Posterior cingulate gyrus (tissue), 11 donors: ENCODE measurements at regions of chr3 and their contacts with region 1.

Region 1: DNA sequence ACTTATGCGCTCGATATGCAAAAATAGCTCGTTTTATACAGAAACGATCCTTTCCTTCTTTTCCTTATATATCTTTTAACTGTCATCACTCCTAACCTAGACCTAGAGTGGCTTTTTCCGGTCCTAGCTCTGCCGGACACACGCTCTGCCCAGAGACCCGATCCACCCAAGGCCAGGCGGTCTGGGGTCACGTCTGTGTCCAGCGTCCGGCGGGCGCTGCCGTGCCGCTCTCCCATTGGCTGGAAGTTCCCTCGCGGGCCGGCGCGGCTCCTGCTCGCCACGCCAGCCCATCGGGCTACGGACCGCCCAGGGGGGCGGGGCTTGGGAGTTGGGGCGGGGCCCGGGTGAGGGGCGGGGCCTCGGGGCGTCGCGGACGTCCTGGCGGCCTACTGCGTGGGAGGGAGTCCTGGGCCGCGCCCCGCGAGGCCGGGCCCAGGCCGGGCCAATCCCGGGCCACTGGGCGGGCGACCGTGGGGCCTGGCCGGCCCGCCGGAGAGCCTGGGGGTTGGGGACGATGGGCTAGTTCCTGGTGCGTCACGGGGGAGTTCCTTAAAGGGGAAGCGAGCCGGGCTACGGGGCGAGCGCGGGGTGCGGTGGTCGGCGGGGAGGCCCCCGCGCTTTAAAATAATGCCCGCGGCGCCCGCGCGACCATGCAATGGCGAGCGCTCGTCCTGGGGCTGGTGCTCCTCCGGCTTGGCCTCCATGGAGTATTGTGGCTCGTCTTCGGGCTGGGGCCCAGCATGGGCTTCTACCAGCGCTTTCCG is at the start of gene EDEM1:
- DNase-seq: peak; percentile 91 to 99 (median 95)

Region 2: DNA sequence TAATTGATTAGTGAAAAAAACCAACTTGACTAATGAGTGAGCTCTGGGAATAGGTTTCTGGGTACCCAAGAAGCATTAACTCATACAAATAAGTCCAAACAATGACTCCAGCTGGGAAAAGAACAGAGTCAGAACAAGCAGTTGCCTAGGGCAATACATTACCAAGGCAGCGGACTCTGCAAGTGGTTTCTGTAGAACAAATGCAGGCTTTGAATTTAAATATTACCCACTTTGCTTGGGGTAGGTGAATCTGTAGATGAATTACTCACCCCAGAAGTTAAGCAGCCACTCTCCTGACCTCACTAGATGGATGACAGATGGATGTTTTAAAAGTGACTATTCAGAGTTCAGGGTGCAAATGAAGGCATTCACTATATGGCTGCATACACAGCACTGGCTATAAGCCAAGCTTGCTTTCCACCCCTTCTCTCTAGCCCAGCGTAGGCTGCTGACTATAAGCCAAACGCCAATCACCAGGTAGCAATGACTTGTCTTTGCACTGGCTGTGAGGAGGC is 281.2 kb before region 1 on chr3:
- intact Hi-C with region 1: no loop called
- DNase-seq: no peak

Region 3: GRCh38 chr3:5122030-5122740 is 65.2 kb before region 1 on chr3 and contains the start of gene ARL8B:
- intact Hi-C with region 1: loop called (anchors 1 kb)
- DNase-seq: peak; percentile 88 to 99 (median 92)

Region 4: GRCh38 chr3:5499404-5499803 is 312.1 kb after region 1 on chr3:
- intact Hi-C with region 1: no loop called
- DNase-seq: no peak